ENCODE measurements at regions of chr13 and their contacts with region 1.

Region 1: DNA sequence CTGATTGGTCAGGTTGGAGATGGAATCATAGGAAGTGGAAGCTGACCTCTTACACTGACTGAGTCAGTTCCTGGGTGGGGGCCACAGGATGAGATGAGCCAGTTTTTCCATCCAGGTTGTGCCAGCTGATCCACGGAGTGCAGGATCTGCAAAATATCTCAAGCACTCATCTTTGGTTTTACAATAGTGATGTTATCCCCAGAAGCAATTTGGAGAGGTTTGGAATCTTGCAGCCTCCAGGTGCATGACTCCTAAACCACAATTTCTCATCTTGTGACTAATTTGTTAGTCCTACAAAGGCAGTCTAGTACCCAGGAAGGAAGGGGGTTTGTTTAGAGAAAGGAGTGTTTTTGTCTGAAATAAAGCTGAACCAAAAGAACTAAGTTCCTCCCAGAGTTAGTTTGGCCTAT is 212.8 kb downstream of the SLITRK6 start:
- DNase-seq: peak; percentile 97
- ATAC-seq: peak; percentile 72
- H3K4me3 ChIP-seq: no peak overlapping the region
- H3K27ac ChIP-seq: peak overlapping the region; percentile 97
- H3K4me1 ChIP-seq: peaks cover 49% of the 10 kb centered on the region
- H3K27me3 ChIP-seq: no peaks in the 10 kb centered on the region
- CTCF ChIP-seq: no peak

Region 2: GRCh38 chr13:85223883-85224656 is 362.4 kb before region 1 on chr13:
- CTCF ChIA-PET with region 1: no interaction called
- POLR2A ChIA-PET with region 1: no interaction called
- intact Hi-C with region 1: no loop called
- DNase-seq: no peak
- ATAC-seq: no peak
- H3K4me3 ChIP-seq: no peak overlapping the region
- H3K27ac ChIP-seq: no peak overlapping the region
- H3K4me1 ChIP-seq: no peaks in the 10 kb centered on the region
- H3K27me3 ChIP-seq: no peaks in the 10 kb centered on the region
- CTCF ChIP-seq: no peak

Region 3: GRCh38 chr13:85236431-85236830 is 350.0 kb before region 1 on chr13:
- CTCF ChIA-PET with region 1: no interaction called
- POLR2A ChIA-PET with region 1: no interaction called
- intact Hi-C with region 1: loop called (anchors 5 kb)
- DNase-seq: peak; percentile 91
- ATAC-seq: peak; percentile 83
- H3K4me3 ChIP-seq: peak overlapping the region; percentile 60
- H3K27ac ChIP-seq: peak overlapping the region; percentile 47
- H3K4me1 ChIP-seq: peaks cover 25% of the 10 kb centered on the region
- H3K27me3 ChIP-seq: no peaks in the 10 kb centered on the region
- CTCF ChIP-seq: no peak

Region 4: DNA sequence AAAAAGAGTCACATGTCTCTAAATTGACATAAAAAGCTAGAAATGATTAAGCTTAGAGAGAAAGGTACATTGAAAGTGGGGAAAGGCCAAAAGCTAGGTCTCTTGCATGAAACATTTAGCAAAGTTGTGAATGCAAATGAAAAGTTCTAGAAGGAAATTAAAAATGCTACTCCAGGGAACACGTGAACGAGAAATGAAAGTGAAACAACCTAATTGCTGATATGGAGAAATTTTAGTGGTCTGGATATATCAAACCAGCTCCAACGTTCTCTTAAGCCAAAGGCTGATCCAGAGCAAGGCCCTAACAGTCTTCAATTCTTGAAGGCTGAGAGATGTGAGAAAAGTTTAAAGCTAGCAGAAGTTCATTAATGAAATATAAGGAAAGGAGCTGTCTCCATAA is 207.0 kb before region 1 on chr13:
- CTCF ChIA-PET with region 1: no interaction called
- POLR2A ChIA-PET with region 1: no interaction called
- intact Hi-C with region 1: loop called (anchors 5 kb)
- DNase-seq: no peak
- ATAC-seq: no peak
- H3K4me3 ChIP-seq: no peak overlapping the region
- H3K27ac ChIP-seq: no peak overlapping the region
- H3K4me1 ChIP-seq: peaks cover 18% of the 10 kb centered on the region
- H3K27me3 ChIP-seq: no peaks in the 10 kb centered on the region
- CTCF ChIP-seq: no peak

Region 5: GRCh38 chr13:85528491-85529215 is 57.8 kb before region 1 on chr13:
- CTCF ChIA-PET with region 1: no interaction called
- POLR2A ChIA-PET with region 1: no interaction called
- intact Hi-C with region 1: loop called (anchors 2 kb)
- DNase-seq: peak; percentile 81
- ATAC-seq: peak; percentile 82
- H3K4me3 ChIP-seq: peak overlapping the region; percentile 44
- H3K27ac ChIP-seq: peak overlapping the region; percentile 72
- H3K4me1 ChIP-seq: peaks cover 29% of the 10 kb centered on the region
- H3K27me3 ChIP-seq: no peaks in the 10 kb centered on the region
- CTCF ChIP-seq: no peak

Region 6: GRCh38 chr13:85729296-85729695 is 142.9 kb after region 1 on chr13:
- CTCF ChIA-PET with region 1: no interaction called
- POLR2A ChIA-PET with region 1: no interaction called
- intact Hi-C with region 1: loop called (anchors 1 kb)
- DNase-seq: peak; percentile 48
- ATAC-seq: no peak
- H3K4me3 ChIP-seq: no peak overlapping the region
- H3K27ac ChIP-seq: no peak overlapping the region; the same call in 1 of the 2 replicates
- H3K4me1 ChIP-seq: peaks cover 27% of the 10 kb centered on the region
- H3K27me3 ChIP-seq: no peaks in the 10 kb centered on the region
- CTCF ChIP-seq: no peak